ENCODE measurements at regions of chr18 and their contacts with region 1.

Region 1: GRCh38 chr18:6878556-6879297 is 149.2 kb downstream of the ARHGAP28 start:
- DNase-seq: no peak

Region 2: DNA sequence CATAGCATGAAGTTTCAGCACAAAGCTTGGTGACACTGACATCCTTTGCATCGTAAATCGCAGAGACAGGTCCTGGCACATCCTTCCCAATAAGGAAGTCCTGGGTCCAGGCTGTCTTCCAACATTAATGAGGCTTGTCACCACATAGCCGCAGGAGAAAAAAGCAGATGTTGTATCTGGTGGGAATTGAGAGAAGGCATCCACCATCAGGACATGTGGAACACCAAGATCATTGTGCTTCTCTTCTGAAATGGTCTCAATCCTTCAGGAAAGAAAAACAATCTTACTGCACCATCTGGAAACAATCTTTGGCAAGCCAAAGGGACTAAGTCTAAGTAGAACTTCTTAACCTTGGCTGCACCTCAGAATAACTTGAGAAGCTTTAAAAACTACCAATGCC is 268.3 kb before region 1 on chr18:
- intact Hi-C with region 1: loop called in 1 of 2 experiments (anchors 10 kb)
- DNase-seq: no peak

Region 3: DNA sequence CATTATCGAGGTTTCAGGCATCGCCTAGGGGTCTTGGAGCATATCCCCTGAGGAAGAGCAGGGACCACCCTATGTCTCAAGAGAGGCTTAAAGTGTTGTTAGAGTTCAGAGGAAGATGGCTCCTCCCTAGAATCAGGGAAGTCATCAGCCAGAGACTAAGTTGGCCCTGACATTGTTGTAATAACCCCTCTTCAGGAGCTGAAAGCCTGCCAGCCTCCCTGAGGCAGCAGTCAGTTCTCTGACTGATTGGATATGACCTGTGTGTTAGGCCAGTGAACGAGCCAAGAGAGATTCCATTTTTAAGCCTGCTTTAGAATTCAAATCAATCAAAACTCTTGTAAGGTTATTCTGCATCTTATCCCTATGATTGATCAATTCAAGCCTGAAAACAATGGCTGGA is 114.3 kb before region 1 on chr18:
- intact Hi-C with region 1: loop called in 1 of 2 experiments (anchors 10 kb)
- DNase-seq: no peak

Region 4: GRCh38 chr18:7152440-7152839 is 273.7 kb after region 1 on chr18:
- intact Hi-C with region 1: no loop called
- DNase-seq: no peak